Posterior vena cava (tissue), 2 donors: ENCODE measurements at regions of chr19 and their contacts with region 1.

Region 1: DNA sequence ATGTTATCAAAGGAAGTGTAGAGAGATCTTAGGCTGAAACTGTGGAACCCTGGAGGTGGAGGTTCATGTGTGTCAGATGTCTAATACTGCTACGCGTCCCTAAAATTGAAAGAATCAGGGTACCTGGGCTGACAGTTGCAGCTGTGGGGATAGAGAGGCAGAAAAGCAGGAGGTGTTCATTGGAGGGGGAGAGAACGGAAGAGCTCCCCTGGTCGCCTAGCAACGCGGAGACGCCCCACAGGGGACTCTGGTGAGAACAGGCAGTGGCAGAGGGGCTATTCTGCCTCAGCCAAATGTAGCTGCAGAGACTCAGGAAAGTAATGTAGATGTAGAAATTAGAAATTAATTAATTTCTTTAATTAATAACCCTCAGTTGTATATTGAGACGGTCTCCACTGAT is 10.1 kb upstream of the ZNF835 start:
- DNase-seq: no peak

Region 2: DNA sequence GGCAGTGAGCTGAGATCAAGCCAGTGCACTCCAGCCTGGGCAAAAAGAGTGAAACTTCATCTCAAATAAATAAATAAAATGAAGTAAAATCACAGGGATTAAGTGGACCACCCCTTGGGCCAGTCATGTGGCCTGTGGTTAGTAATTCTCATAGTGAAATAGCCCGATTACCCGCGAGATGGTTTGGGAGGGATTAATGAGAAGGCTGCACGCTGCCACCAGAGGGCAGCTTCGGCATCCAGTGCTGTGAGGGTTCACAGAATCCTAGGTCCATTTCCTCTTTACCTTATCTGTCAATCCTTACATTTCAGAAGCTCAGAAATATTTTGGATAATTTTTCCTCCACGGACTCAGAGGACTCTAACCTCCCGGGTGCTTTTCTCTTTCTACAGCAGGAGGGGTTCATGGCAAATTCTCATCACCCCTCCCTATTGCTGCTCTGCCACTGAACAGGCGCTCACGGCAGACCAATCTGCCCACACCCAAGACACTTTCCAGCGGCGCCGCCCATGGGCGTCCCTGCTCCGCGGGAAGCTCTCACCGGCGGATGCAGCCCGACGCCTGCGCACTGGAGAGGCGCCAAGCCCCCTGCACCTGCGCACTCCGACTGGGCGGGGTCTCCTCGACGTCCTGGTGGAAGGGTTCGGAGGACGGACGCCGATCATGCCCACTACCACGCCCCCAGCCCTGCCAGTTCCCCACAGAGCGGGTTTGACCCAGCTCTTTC is 21.2 kb before region 1 on chr19:
- intact Hi-C with region 1: loop called in 1 of 2 experiments (anchors 1 kb)
- DNase-seq: no peak